Endothelial cell of umbilical vein (primary cell): ENCODE measurements at regions of chr13 and their contacts with region 1.

Region 1: GRCh38 chr13:43804461-43805070 is 17.8 kb upstream of the ENOX1 start:
- DNase-seq: peak; percentile 83
- H3K4me3 ChIP-seq: peak overlapping the region in 1 of 3 experiments; percentile 60
- H3K27ac ChIP-seq: peak overlapping the region; percentile 5
- H3K4me1 ChIP-seq: peaks cover 7% of the 10 kb centered on the region
- H3K27me3 ChIP-seq: no peaks in the 10 kb centered on the region
- CTCF ChIP-seq: peak; percentile 6 to 19
- POLR2A ChIP-seq: no peak

Region 2: DNA sequence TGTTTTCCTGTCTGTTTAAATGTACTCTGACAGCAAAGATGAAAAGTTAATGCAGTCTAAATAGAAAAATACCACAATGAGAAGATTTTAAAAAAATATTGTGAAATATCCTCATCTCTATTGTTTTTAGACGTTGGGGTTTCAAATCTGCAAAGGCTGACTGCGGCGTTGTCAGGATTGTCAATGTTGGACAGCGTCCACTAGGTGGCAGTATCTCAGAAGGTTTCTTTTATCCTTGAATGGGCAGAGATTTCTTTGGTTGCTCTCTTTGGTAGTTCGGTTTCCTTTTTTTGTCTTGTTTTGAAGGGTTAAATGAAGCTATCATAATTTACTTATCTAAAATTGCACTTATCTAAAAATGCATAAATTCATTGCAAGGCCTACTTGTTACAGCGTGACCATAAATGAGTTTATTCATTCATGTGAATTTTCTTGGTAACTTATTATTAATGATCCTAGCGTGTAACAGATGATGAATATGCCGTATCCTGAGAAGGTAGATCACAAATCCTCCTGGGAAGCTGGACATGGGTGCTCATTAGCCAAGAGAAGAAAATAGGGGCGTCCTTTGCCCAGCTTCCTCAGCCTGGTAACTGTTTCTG is 1209.5 kb before region 1 on chr13:
- CTCF ChIA-PET with region 1: interaction called, 29 read pairs
- POLR2A ChIA-PET with region 1: no interaction called
- dilution Hi-C with region 1: no loop called
- intact Hi-C with region 1: loop called (anchors 1 kb)
- DNase-seq: peak; percentile 62
- H3K4me3 ChIP-seq: no peak overlapping the region
- H3K27ac ChIP-seq: no peak overlapping the region
- H3K4me1 ChIP-seq: no peaks in the 10 kb centered on the region
- H3K27me3 ChIP-seq: peaks cover 3 to 10% of the 10 kb centered on the region in 2 experiments
- CTCF ChIP-seq: peak; percentile 72 to 75
- POLR2A ChIP-seq: no peak

Region 3: DNA sequence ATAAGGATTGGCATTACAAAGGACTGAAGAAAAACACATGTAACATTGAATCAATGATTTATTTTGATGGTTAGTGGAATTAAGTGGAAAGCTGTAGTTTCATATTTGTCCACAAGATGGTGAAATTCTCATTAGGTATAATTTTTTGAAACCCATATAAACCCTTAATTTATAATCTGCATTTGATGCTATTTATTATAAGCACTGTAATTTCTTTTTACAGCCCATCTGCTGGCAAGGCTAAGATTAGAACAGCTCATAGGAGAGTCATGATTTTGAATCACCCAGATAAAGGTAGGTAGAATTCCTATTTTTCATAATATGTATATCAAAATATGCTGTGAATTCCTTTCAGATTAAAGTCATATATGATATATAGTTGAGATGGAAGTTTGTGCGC is 719.0 kb before region 1 on chr13:
- CTCF ChIA-PET with region 1: interaction called, 168 read pairs
- POLR2A ChIA-PET with region 1: no interaction called
- dilution Hi-C with region 1: no loop called
- intact Hi-C with region 1: loop called (anchors 1 kb)
- DNase-seq: peak; percentile 59
- H3K4me3 ChIP-seq: no peak overlapping the region
- H3K27ac ChIP-seq: no peak overlapping the region
- H3K4me1 ChIP-seq: peaks cover 3% of the 10 kb centered on the region
- H3K27me3 ChIP-seq: no peaks in the 10 kb centered on the region
- CTCF ChIP-seq: peak in 1 of 2 donors; percentile 35
- POLR2A ChIP-seq: no peak

Region 4: DNA sequence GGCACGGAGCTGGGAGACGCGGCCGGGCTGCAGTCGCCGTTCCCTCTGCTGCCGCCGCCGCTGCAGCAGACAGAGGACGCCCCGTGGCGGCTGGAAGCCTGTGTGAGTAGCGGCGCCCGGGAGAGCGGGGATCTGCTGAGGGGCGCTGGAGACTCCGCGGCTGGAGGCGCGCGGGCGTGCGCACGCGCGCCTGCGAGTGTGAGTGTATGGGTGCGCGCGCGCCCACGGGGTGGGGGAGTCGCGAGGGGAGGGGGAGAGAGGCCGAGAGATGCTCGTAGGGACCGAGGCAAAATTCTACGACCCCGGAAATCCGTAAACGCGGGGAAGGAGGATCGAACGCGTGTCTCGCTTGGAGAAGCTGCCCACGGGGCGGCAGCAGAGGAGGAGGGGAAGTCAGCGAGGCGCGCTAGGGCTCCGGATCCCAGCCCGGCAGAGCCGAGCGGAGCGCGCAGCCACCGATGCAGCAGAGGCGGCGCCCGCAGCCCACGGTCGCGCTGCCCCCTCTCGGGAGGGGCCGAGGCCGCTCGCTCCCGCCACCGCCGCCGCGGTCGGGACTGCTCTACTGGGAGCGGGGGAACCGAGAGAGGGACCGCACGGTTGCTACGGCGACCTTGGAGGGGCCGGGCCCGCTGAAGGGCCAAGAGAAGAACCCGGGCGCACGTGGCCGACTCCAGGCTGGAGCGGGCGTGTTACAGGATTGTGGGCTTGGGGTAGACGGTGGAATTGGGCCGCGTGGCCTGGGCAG is 17.6 kb before region 1 on chr13 and contains the start of gene ENOX1:
- CTCF ChIA-PET with region 1: interaction called, 23 read pairs
- POLR2A ChIA-PET with region 1: no interaction called
- dilution Hi-C with region 1: no loop called
- intact Hi-C with region 1: no loop called
- DNase-seq: peak; percentile 45
- H3K4me3 ChIP-seq: peak within 1 kb of the TSS; percentile 47 to 51 (median 48)
- H3K27ac ChIP-seq: no peak within 1 kb of the TSS
- H3K4me1 ChIP-seq: peaks cover 18% of the 10 kb centered on the region
- H3K27me3 ChIP-seq: peaks cover 0 to 2% of the 10 kb centered on the region in 2 experiments
- CTCF ChIP-seq: peak in 1 of 2 donors; percentile 8
- POLR2A ChIP-seq: no peak
- total RNA-seq, gene ENOX1: 0.28 and 0.97 TPM in 2 replicates

Region 5: GRCh38 chr13:43830497-43830881 is 25.9 kb after region 1 on chr13:
- CTCF ChIA-PET with region 1: interaction called, 11 read pairs
- POLR2A ChIA-PET with region 1: no interaction called
- dilution Hi-C with region 1: no loop called
- intact Hi-C with region 1: no loop called
- DNase-seq: no peak
- H3K4me3 ChIP-seq: no peak overlapping the region
- H3K27ac ChIP-seq: no peak overlapping the region
- H3K4me1 ChIP-seq: no peaks in the 10 kb centered on the region
- H3K27me3 ChIP-seq: no peaks in the 10 kb centered on the region
- CTCF ChIP-seq: no peak
- POLR2A ChIP-seq: no peak

Region 6: DNA sequence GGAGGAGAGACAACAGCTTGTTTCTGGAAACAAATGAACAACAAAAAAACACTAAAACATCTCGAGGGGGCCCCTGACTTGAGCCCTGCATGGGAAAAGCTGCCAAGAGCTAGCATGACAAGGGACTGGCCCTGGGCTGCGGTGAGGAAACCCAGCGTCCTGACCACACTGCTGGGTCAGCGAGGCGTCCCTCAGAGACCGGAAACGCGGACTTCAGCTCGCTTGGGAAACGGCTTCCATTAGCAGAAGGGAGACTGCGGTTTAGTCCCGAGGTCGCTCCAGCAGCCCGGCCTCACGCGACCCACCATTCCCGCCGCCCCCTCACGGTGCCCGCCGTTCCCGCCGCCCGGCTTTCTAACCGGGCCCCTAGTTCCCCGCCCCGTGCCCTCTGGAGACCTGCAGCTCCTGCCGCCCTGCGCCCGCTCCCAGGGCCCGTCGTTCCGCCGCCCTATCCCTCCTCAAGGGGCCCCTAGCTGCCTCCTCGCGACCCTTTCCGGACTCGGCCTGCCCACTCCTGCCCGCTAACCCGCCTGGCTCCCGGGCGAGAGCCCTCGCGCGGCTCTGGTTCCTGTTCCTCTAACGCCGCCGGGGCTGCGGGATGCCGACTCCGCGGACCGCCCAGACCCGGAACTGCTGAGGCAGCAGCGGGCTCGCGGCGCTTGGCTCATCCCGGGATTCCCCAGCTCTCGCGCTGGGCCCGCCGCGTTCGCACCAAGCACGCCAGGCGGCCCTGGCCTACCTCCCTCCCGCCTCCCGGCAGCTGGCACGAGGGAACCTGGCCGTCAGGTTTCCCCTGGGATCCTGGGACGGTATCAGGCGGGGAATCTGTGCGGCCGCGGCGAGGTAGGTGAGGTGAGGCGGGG is 74.6 kb after region 1 on chr13 and contains the start of gene CCDC122:
- CTCF ChIA-PET with region 1: interaction called, 11 read pairs
- POLR2A ChIA-PET with region 1: no interaction called
- dilution Hi-C with region 1: no loop called
- intact Hi-C with region 1: loop called (anchors 5 kb)
- DNase-seq: peak; percentile 79
- H3K4me3 ChIP-seq: peak within 1 kb of the TSS; percentile 71 to 92 (median 76)
- H3K27ac ChIP-seq: peak within 1 kb of the TSS; percentile 90
- H3K4me1 ChIP-seq: peaks cover 11% of the 10 kb centered on the region
- H3K27me3 ChIP-seq: no peaks in the 10 kb centered on the region
- CTCF ChIP-seq: no peak
- POLR2A ChIP-seq: peak; percentile 74
- total RNA-seq, gene CCDC122: 5.1 and 7.5 TPM in 2 replicates